Naive thymus-derived CD4-positive, alpha-beta T cell (primary cell): ENCODE measurements at regions of chr9 and their contacts with region 1.

Region 1: DNA sequence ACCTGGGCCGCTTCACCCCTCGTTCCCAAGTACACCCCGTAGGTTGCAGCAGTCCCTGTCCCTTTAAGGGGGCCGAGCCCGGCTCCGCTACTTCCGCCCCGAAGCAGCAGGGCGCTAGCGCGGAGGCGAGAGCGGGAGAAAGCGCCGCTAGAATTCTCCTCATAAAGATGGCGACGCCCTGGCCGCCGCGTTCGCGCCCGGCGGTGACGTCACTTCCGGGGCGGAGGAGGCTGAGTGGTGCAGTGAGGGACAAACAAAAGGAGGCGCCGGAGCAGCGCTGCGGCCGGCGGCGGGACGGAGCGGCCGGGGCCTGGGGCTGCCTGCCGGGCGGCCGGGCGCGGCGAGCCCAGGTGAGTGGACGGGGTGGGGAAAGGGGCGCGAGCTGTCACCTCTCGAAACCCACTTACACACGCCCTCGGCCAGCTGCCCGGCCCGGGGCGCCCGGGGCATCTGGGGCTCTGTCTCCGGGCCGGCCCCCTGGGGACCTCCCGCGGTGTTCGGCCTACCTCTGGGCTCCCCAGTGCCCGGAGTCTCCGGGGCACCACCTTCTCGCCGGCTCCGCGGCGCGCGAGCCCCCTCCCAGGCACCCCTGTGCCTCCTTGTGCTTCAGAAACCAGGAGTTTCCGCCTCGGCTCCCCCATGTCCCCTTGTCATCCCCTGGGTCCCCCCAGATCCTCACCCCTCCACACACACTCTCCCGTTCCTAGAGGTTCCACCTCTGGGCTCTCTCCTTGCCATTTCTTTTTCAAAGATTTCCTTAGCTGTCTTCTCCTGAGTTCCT is at the starts of genes KYAT1 and LRRC8A:
- DNase-seq: peak; percentile 95 to 99 (median 97)
- ATAC-seq: peak; percentile 95
- H3K4me3 ChIP-seq: peak within 1 kb of the TSS; percentile 94
- H3K4me3 Mint-ChIP-seq: peak within 1 kb of the TSS; percentile 97 to 99 (median 98)
- H3K27ac ChIP-seq: peak within 1 kb of the TSS; percentile 95
- H3K27ac Mint-ChIP-seq: peak within 1 kb of the TSS; percentile 94 to 99 (median 97)
- H3K4me1 ChIP-seq: peaks cover 24 to 25% of the 10 kb centered on the region in 2 donors
- H3K4me1 Mint-ChIP-seq: peaks cover 45 to 79% (median 61%) of the 10 kb centered on the region in 7 donors
- H3K27me3 ChIP-seq: no peaks in the 10 kb centered on the region
- H3K27me3 Mint-ChIP-seq: no peaks in the 10 kb centered on the region
- total RNA-seq, gene KYAT1: 7.2 to 18.2 (median 14.8) TPM
- total RNA-seq, gene LRRC8A: 31.3 to 48.8 (median 34.5) TPM

Region 2: GRCh38 chr9:128322404-128323211 is 559.5 kb before region 1 on chr9 and contains the starts of genes COQ4 and TRUB2:
- CTCF ChIA-PET with region 1: no interaction called
- POLR2A ChIA-PET with region 1: no interaction called
- intact Hi-C with region 1: loop called (anchors 1 kb)
- DNase-seq: peak; percentile 80 to 95 (median 94)
- ATAC-seq: peak; percentile 95
- H3K4me3 ChIP-seq: peak within 1 kb of the TSS; percentile 98
- H3K4me3 Mint-ChIP-seq: peak within 1 kb of the TSS; percentile 82 to 99 (median 96)
- H3K27ac ChIP-seq: peak within 1 kb of the TSS; percentile 85
- H3K27ac Mint-ChIP-seq: peak within 1 kb of the TSS; percentile 95 to 99 (median 98)
- H3K4me1 ChIP-seq: peaks cover 10 to 13% of the 10 kb centered on the region in 2 donors
- H3K4me1 Mint-ChIP-seq: peaks cover 4 to 45% (median 29%) of the 10 kb centered on the region in 7 donors
- H3K27me3 ChIP-seq: no peaks in the 10 kb centered on the region
- H3K27me3 Mint-ChIP-seq: peaks cover 0 to 2% (median 0%) of the 10 kb centered on the region in 5 donors
- total RNA-seq, gene COQ4: 32.9 to 47.2 (median 42.4) TPM
- total RNA-seq, gene TRUB2: 11.5 to 27.2 (median 21.6) TPM

Region 3: DNA sequence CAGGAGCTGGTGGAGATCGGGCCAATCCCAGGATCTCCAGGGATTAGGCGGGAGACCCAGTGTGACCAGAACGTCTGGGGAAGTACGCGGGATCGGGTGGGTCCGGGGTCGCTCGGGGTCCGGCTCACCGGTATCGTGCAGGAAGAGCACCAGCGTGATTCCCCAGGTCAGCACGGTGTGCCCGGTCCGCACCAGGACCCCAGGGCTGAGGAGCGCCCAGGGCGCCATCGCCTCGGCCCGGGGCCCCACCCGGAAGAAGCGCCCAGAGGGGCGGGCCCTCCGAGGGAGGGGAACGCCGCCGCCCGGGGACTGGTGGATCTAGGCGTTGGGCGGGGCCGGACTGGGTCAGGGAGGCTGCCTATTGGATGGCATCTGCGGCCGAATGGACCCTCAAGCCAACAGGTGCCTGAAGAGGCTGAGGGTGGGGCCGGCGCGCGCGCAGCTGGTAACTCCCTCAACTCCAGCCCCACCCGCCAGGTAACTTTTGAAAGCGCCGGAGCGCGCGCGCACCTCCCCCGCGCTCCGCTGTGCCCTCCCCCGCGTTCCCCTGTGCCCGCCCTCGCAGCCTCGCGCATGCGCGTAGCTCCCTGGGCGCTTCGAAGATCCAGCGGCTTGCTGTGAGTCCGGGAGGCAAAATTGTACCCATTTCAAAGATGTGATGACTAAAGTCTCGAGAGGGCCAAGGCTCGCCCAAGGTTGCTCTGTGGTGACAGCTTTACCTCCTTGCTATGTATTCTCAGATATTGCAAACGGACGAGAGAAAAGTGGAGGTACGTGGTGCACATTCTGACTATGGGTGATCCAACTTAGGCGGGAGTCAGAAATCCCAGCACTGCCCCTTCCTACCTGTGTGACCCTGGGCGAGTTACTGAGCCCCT is 158.0 kb before region 1 on chr9 and contains the start of gene ZDHHC12:
- CTCF ChIA-PET with region 1: no interaction called
- POLR2A ChIA-PET with region 1: interaction called, 3 read pairs
- intact Hi-C with region 1: loop called (anchors 1 to 2 kb)
- DNase-seq: peak; percentile 96 to 99 (median 99)
- ATAC-seq: peak; percentile 97
- H3K4me3 ChIP-seq: peak within 1 kb of the TSS; percentile 97
- H3K4me3 Mint-ChIP-seq: peak within 1 kb of the TSS; percentile 85 to 97 (median 94)
- H3K27ac ChIP-seq: peak within 1 kb of the TSS; percentile 89
- H3K27ac Mint-ChIP-seq: peak within 1 kb of the TSS; percentile 85 to 96 (median 94)
- H3K4me1 ChIP-seq: peaks cover 13 to 29% of the 10 kb centered on the region in 2 donors
- H3K4me1 Mint-ChIP-seq: peaks cover 23 to 46% (median 39%) of the 10 kb centered on the region in 7 donors
- H3K27me3 ChIP-seq: no peaks in the 10 kb centered on the region
- H3K27me3 Mint-ChIP-seq: no peaks in the 10 kb centered on the region
- total RNA-seq, gene ZDHHC12: 21.2 to 70.3 (median 25.7) TPM

Region 4: DNA sequence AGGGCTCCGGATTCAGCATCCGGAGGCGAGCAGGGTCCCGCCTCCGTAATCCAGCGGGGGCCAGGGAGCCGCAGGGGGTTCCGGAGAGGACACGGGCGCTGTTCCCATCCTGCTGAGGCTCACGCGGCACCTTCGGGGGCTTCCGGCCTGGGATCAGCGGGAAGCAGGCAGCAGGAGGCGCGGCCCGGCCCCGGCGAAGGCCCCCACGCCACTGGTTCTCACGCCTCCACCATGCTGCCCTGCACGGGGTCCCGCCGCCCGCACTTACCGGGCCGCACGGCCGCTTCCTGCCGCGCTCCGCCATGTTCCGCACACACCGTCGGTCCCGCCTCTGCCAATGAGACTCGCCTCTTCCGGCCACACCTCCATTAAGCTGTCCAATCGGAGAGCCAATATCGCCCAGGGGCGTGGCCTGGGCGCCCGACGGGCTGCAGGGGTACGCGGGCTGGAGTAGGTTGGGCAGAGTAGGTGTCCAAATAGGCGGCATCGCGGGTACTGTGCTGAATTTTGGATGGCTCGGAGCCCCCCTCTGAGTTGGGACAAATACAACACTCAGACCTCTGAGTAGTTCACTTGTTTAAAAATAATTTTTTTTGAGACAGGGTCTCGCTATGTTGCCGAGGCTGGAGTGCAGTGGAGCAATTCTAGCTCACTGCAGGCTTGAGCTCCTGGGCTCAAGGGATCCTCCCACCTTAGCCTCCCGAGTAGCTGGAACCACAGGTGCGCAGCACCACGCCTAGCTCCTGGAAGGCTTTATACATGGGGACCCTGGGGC is 52.4 kb before region 1 on chr9 and contains the start of gene SPOUT1:
- CTCF ChIA-PET with region 1: interaction called, 5 read pairs
- POLR2A ChIA-PET with region 1: no interaction called
- intact Hi-C with region 1: loop called in 1 of 2 experiments (anchors 1 kb)
- DNase-seq: peak; percentile 86 to 95 (median 92)
- ATAC-seq: peak; percentile 100
- H3K4me3 ChIP-seq: peak within 1 kb of the TSS; percentile 91
- H3K4me3 Mint-ChIP-seq: peak within 1 kb of the TSS; percentile 92 to 99 (median 95)
- H3K27ac ChIP-seq: peak within 1 kb of the TSS; percentile 81
- H3K27ac Mint-ChIP-seq: peak within 1 kb of the TSS; percentile 91 to 97 (median 94)
- H3K4me1 ChIP-seq: peaks cover 8 to 15% of the 10 kb centered on the region in 2 donors
- H3K4me1 Mint-ChIP-seq: peaks cover 14 to 26% (median 19%) of the 10 kb centered on the region in 7 donors
- H3K27me3 ChIP-seq: no peaks in the 10 kb centered on the region
- H3K27me3 Mint-ChIP-seq: no peaks in the 10 kb centered on the region
- total RNA-seq, gene SPOUT1: 38.9 to 83.6 (median 65.2) TPM

Region 5: GRCh38 chr9:128921881-128922763 is 40.0 kb after region 1 on chr9:
- CTCF ChIA-PET with region 1: interaction called, 11 read pairs
- POLR2A ChIA-PET with region 1: interaction called, 4 read pairs
- intact Hi-C with region 1: loop called (anchors 1 to 5 kb)
- DNase-seq: peak in 1 of 9 donors; percentile 15
- ATAC-seq: peak; percentile 62
- H3K4me3 ChIP-seq: peak overlapping the region; percentile 35
- H3K4me3 Mint-ChIP-seq: peak overlapping the region in 9 of 10 donors; percentile 32 to 77 (median 64)
- H3K27ac ChIP-seq: peak overlapping the region; percentile 47
- H3K27ac Mint-ChIP-seq: peak overlapping the region in 6 of 9 donors; percentile 14 to 83 (median 62)
- H3K4me1 ChIP-seq: peaks cover 0 to 6% of the 10 kb centered on the region in 2 donors
- H3K4me1 Mint-ChIP-seq: peaks cover 10 to 27% (median 15%) of the 10 kb centered on the region in 7 donors
- H3K27me3 ChIP-seq: no peaks in the 10 kb centered on the region
- H3K27me3 Mint-ChIP-seq: peaks cover 0 to 3% (median 0%) of the 10 kb centered on the region in 5 donors

Region 6: DNA sequence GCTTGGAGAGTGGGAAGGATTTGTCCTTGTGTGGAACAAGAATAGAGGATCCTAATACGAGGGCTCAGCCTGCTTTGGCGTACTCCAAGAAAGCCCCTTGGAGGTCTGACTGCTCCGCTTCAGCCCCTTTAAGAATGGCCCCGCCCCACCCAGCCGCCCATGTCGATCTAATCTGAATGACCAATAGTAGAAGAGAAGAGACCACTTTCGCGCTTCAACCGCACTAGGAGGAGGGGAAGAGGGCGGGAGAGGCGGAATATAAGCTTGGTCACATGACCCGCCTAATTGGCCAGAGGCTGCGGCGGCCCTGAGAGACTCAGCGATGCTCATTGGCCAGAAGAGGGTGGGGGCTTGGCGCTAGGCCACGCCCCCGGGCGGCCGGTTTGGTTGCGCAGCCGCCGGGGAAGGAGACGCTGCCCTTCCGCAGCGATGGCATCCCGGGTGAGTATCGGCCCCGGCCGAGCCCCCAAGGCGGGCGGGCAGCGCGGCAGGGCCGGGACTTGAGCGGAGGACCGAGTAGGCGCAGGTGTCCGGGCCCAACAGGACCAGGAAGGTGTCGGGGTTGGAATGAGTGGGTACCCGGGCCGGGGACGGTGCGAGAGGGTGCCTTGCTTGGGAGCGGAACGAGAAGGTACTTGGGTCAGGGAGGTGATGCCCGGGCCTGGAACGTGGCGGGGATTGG is 154.3 kb after region 1 on chr9 and contains the start of gene MIGA2:
- CTCF ChIA-PET with region 1: no interaction called
- POLR2A ChIA-PET with region 1: no interaction called
- intact Hi-C with region 1: loop called in 1 of 2 experiments (anchors 1 kb)
- DNase-seq: peak; percentile 78 to 93 (median 90)
- ATAC-seq: peak; percentile 99
- H3K4me3 ChIP-seq: peak within 1 kb of the TSS; percentile 87
- H3K4me3 Mint-ChIP-seq: peak within 1 kb of the TSS; percentile 90 to 99 (median 94)
- H3K27ac ChIP-seq: peak within 1 kb of the TSS; percentile 72
- H3K27ac Mint-ChIP-seq: peak within 1 kb of the TSS; percentile 56 to 93 (median 87)
- H3K4me1 ChIP-seq: peaks cover 13 to 17% of the 10 kb centered on the region in 2 donors
- H3K4me1 Mint-ChIP-seq: peaks cover 22 to 41% (median 37%) of the 10 kb centered on the region in 7 donors
- H3K27me3 ChIP-seq: no peaks in the 10 kb centered on the region
- H3K27me3 Mint-ChIP-seq: no peaks in the 10 kb centered on the region
- total RNA-seq, gene MIGA2: 50.0 to 73.4 (median 60.7) TPM